ENCODE measurements at regions of chr2 and their contacts with region 1.

Region 1: GRCh38 chr2:43226558-43226954 is at the start of gene ZFP36L2:
- DNase-seq: peak; percentile 92 to 98 (median 96)
- ATAC-seq: peak; percentile 61 to 71
- H3K4me3 Mint-ChIP-seq: peak within 1 kb of the TSS; percentile 71 to 100 (median 96)
- H3K27ac Mint-ChIP-seq: peak within 1 kb of the TSS; percentile 82 to 99 (median 96)
- H3K4me1 Mint-ChIP-seq: peaks cover 20 to 41% (median 31%) of the 10 kb centered on the region in 4 donors
- H3K27me3 Mint-ChIP-seq: peaks cover 0 to 5% (median 0%) of the 10 kb centered on the region in 5 donors
- polyA plus RNA-seq, gene ZFP36L2: 222 to 420 (median 390) TPM

Region 2: GRCh38 chr2:42810121-42810970 is 416.2 kb before region 1 on chr2:
- POLR2A ChIA-PET with region 1: interaction called, 27 read pairs
- DNase-seq: peak; percentile 86 to 99 (median 96)
- ATAC-seq: peak; percentile 76 to 79
- H3K4me3 Mint-ChIP-seq: peak overlapping the region; percentile 87 to 99 (median 96)
- H3K27ac Mint-ChIP-seq: peak overlapping the region; percentile 97 to 100 (median 99)
- H3K4me1 Mint-ChIP-seq: peaks cover 12 to 20% (median 17%) of the 10 kb centered on the region in 4 donors
- H3K27me3 Mint-ChIP-seq: peaks cover 0 to 2% (median 0%) of the 10 kb centered on the region in 5 donors

Region 3: GRCh38 chr2:42974721-42975717 is 251.5 kb before region 1 on chr2:
- POLR2A ChIA-PET with region 1: interaction called, 48 read pairs
- DNase-seq: peak; percentile 39 to 76 (median 58)
- ATAC-seq: peak; percentile 60 to 78
- H3K4me3 Mint-ChIP-seq: no peak overlapping the region
- H3K27ac Mint-ChIP-seq: peak overlapping the region in 5 of 10 donors; percentile 7 to 31 (median 16)
- H3K4me1 Mint-ChIP-seq: peaks cover 13 to 33% (median 17%) of the 10 kb centered on the region in 4 donors
- H3K27me3 Mint-ChIP-seq: no peaks in the 10 kb centered on the region

Region 4: DNA sequence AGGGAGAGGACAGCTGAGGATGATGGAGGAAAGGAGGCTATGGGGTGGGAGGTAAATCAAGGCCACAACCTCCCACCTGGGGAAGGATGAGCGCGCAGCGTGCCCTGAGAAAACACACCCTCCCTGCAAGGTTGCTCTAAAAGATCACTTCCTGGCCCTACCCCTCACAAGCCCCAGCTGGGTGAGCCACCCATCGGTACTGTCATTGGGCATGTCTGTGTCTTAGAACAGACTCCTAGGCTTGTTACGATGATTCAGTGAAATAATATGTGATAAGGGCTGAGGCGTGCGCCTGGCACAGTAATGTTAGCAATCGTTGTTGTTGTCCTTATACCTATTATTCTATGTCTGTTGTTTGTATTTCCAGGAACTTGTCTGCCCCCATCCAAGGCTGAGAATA is 175.2 kb before region 1 on chr2:
- POLR2A ChIA-PET with region 1: interaction called, 10 read pairs
- DNase-seq: peak in 7 of 10 donors; percentile 14 to 76 (median 40)
- ATAC-seq: peak; percentile 96 to 97
- H3K4me3 Mint-ChIP-seq: peak overlapping the region in 7 of 10 donors; percentile 0 to 52 (median 19)
- H3K27ac Mint-ChIP-seq: peak overlapping the region in 9 of 10 donors; percentile 27 to 87 (median 46)
- H3K4me1 Mint-ChIP-seq: peaks cover 38 to 41% (median 38%) of the 10 kb centered on the region in 4 donors
- H3K27me3 Mint-ChIP-seq: no peaks in the 10 kb centered on the region

Region 5: DNA sequence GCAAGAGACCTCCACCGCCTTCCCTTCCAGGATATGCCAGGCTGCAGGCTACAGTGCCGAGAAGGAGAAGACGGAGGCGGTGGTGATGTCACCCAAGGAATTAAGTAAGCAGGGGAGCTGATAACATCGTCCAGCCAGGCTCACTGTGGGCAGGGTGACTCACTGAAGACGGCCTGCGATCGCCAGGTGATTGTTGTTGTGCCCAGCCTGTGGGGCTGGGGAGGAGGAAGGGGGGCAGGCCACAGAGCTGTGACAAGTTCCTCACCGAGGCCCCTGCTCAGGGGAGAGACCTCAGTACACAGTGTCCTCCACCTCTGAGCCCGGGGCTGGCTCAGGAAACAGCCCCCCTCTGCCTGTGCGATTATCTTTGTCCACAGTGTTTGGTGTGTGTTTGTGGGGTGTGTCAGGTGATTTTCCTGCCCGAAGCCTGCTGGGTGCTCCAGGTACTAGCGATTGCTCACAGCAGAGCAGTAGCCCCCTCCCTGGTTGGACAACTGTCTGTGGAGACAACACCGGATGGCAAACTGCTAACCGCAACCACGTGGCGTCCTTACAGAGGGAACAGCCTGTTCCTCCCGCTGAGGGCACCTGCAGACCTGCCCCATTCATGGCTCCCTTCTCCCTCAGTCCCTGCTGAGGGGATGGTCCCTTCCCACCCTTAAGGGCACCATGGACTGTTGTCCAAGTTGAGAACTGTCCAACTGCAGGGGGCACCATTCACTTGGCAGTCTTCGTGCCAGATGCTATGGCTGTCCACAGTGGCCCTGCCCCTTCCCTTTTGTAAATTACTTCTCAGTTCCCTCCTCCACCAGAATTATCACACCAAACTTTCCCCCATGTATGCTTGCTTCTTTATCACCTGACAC is 95.3 kb before region 1 on chr2:
- POLR2A ChIA-PET with region 1: interaction called, 2,148 read pairs
- DNase-seq: peak; percentile 45 to 94 (median 88)
- ATAC-seq: peak; percentile 37 to 58
- H3K4me3 Mint-ChIP-seq: peak overlapping the region; percentile 65 to 90 (median 76)
- H3K27ac Mint-ChIP-seq: peak overlapping the region; percentile 96 to 100 (median 100)
- H3K4me1 Mint-ChIP-seq: peaks cover 55 to 93% (median 90%) of the 10 kb centered on the region in 4 donors
- H3K27me3 Mint-ChIP-seq: no peaks in the 10 kb centered on the region

Region 6: GRCh38 chr2:43210467-43211303 is 15.9 kb before region 1 on chr2:
- POLR2A ChIA-PET with region 1: interaction called, 883 read pairs
- DNase-seq: peak in 6 of 10 donors; percentile 36 to 69 (median 56)
- ATAC-seq: peak; percentile 54 to 75
- H3K4me3 Mint-ChIP-seq: peak overlapping the region in 7 of 10 donors; percentile 9 to 80 (median 52)
- H3K27ac Mint-ChIP-seq: peak overlapping the region; percentile 66 to 93 (median 86)
- H3K4me1 Mint-ChIP-seq: peaks cover 28 to 64% (median 58%) of the 10 kb centered on the region in 4 donors
- H3K27me3 Mint-ChIP-seq: no peaks in the 10 kb centered on the region

Region 7: GRCh38 chr2:43246641-43247040 is 20.1 kb after region 1 on chr2:
- POLR2A ChIA-PET with region 1: no interaction called
- DNase-seq: no peak
- ATAC-seq: no peak
- H3K4me3 Mint-ChIP-seq: no peak overlapping the region
- H3K27ac Mint-ChIP-seq: no peak overlapping the region
- H3K4me1 Mint-ChIP-seq: peaks cover 0 to 4% (median 2%) of the 10 kb centered on the region in 4 donors
- H3K27me3 Mint-ChIP-seq: no peaks in the 10 kb centered on the region

Region 8: DNA sequence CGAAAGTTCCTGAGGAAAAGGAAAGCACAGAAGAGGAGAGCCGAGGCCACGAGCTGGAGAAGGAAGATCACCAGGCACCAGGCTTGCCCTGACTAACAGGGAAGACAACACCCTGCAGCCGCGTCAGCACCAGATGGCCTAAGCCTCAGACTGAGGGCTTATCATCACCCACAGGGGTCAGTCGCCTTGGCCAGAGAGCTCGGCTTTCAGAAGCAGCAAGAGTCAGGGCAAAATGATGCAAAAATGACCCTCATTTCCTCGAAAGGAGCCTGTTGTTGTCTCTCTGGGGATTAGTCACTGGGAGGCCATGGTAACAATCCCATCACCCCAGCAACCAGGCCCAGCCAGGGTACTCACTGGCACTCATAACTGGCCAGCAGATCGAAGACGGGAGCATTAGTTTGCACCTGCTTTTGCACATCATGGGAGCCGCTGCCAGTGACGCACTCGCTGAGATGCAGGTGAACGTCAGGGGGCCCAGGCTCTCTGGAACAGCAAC is 42.6 kb after region 1 on chr2:
- POLR2A ChIA-PET with region 1: no interaction called
- DNase-seq: no peak
- ATAC-seq: no peak
- H3K4me3 Mint-ChIP-seq: no peak overlapping the region
- H3K27ac Mint-ChIP-seq: peak overlapping the region in 2 of 10 donors; percentile 60 to 75
- H3K4me1 Mint-ChIP-seq: peaks cover 0 to 3% (median 0%) of the 10 kb centered on the region in 4 donors
- H3K27me3 Mint-ChIP-seq: no peaks in the 10 kb centered on the region